Dendritic cell treated with granulocyte-macrophage colony-stimulating factor and Interleukin-4, amounts not matched to agents 40 ng/mL and 50 ng/mL, for 4 days (primary cell): ENCODE measurements at regions of chr5 and their contacts with region 1.

Region 1: GRCh38 chr5:131324303-131324702 is 60.5 kb downstream of the CDC42SE2 start:
- H3K4me3 Mint-ChIP-seq: no peak overlapping the region
- H3K27ac Mint-ChIP-seq: no peak overlapping the region
- H3K4me1 Mint-ChIP-seq: peaks cover 53% of the 10 kb centered on the region
- H3K27me3 Mint-ChIP-seq: no peaks in the 10 kb centered on the region

Region 2: DNA sequence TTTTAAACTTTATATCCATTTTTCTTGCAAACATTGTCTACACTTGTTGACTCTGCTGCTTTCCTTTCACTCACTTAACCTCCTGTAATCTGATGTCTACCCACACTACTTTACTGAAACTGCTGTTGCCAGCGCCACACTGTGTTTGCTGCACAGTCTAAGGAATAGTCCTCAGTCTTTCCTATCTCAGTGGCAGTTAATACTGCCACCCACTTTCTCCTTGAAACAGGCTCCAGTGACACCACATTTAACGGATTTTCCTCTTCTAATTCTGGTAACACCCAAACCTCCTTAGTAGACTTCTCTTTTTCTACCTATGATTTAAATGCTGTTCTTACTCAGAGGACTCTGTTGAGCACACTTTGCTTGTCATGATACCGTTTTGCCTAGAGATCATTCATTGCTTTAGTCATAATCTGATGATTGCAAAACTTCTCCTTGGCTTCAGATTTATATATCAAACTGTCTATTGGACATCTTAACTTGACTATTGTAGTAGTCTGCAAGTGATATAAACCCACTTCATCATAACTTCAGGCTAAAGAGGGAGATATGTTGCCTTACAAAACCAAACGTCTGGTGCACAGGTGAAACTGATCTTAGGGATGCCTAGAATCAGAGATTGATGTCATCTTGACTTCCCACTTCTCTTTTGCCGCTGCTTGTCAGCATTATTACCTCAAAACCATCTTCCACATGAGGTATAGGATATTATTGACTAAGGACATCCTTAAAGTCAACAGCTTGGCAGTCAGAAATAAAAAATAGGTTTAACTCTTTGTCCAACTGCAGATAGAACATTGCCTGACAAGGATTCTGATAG is 33.6 kb after region 1 on chr5:
- intact Hi-C with region 1: loop called (anchors 5 kb)
- H3K4me3 Mint-ChIP-seq: no peak overlapping the region
- H3K27ac Mint-ChIP-seq: peak overlapping the region; percentile 67
- H3K4me1 Mint-ChIP-seq: peaks cover 37% of the 10 kb centered on the region
- H3K27me3 Mint-ChIP-seq: no peaks in the 10 kb centered on the region